ENCODE measurements at regions of chr3 and their contacts with region 1.

Region 1: DNA sequence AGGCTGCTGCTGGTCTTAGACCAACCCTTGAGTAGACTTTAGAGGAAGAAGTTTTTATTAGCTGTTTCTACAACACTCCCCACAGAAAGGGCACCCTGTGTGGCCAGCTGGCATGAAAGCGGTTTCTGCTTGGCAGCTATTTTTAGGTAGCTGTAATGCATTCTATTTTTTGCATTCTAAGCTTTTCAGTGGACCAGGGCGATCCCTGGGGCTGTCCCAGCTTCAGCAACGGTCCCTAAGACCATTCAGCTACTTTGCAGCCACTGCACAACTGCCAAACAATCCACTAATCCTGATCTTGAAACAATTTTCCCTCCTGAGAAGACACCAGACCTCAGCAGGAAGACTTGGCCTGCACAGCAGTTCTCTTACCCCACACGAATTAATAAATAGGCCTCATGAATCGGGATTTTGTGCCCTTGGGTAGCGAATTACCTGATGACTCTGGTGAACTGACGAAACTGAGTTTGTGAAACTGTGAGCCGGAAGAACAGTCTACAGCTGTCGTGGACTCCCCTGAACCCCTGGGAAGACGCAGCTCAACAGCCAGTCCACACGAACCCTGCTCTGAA is 14.6 kb upstream of the TFRC start:
- DNase-seq: peak; percentile 65
- CTCF ChIP-seq: no peak

Region 2: GRCh38 chr3:196080982-196081790 is 15.3 kb before region 1 on chr3:
- CTCF ChIA-PET with region 1: interaction called, 6 read pairs
- POLR2A ChIA-PET with region 1: interaction called, 15 read pairs
- DNase-seq: peak; percentile 46
- CTCF ChIP-seq: no peak

Region 3: GRCh38 chr3:196111939-196112386 is 15.5 kb after region 1 on chr3:
- CTCF ChIA-PET with region 1: interaction called, 20 read pairs
- POLR2A ChIA-PET with region 1: interaction called, 6 read pairs
- DNase-seq: peak; percentile 72
- CTCF ChIP-seq: no peak

Region 4: GRCh38 chr3:196117809-196118455 is 21.5 kb after region 1 on chr3:
- CTCF ChIA-PET with region 1: interaction called, 20 read pairs
- POLR2A ChIA-PET with region 1: interaction called, 6 read pairs
- DNase-seq: peak; percentile 20
- CTCF ChIP-seq: no peak

Measured in GM10248 (cell line).